Natural killer cell (primary cell): ENCODE measurements at regions of chr2 and their contacts with region 1.

Region 1: GRCh38 chr2:62774555-62775366 is 69.2 kb downstream of the EHBP1 start:
- DNase-seq: peak in 1 of 2 donors; percentile 64
- ATAC-seq: peak; percentile 48 to 66 (median 63)
- H3K4me3 ChIP-seq: no peak overlapping the region
- H3K4me3 Mint-ChIP-seq: no peak overlapping the region
- H3K27ac ChIP-seq: no peak overlapping the region
- H3K27ac Mint-ChIP-seq: no peak overlapping the region
- H3K4me1 ChIP-seq: no peaks in the 10 kb centered on the region
- H3K4me1 Mint-ChIP-seq: peaks cover 0 to 5% of the 10 kb centered on the region in 2 donors
- H3K27me3 ChIP-seq: no peaks in the 10 kb centered on the region
- H3K27me3 Mint-ChIP-seq: no peaks in the 10 kb centered on the region
- CTCF ChIP-seq: peak; percentile 89

Region 2: DNA sequence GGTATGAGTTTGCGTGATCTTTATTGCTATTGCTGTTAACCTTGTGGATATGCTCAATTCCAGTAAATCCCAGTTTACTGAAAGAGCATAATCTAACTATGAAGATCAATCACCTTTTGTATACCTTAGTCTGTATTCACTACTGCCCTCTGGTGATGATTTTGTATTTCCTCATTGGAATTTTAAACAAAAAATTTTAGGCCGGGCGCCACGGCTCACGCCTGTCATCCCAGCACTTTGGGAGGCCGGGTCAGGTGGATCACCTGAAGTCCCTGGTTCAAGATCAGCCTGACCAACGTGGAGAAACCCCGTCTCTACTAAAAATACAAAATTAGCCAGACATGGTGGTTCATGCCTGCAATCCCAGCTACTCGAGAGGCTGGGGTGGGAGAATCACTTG is 864.2 kb before region 1 on chr2:
- intact Hi-C with region 1: loop called (anchors 5 kb)
- DNase-seq: no peak
- ATAC-seq: no peak
- H3K4me3 ChIP-seq: no peak overlapping the region
- H3K4me3 Mint-ChIP-seq: no peak overlapping the region
- H3K27ac ChIP-seq: no peak overlapping the region
- H3K27ac Mint-ChIP-seq: no peak overlapping the region
- H3K4me1 ChIP-seq: peaks cover 6% of the 10 kb centered on the region
- H3K4me1 Mint-ChIP-seq: peaks cover 17 to 24% of the 10 kb centered on the region in 2 donors
- H3K27me3 ChIP-seq: no peaks in the 10 kb centered on the region
- H3K27me3 Mint-ChIP-seq: no peaks in the 10 kb centered on the region
- CTCF ChIP-seq: no peak

Region 3: GRCh38 chr2:61993444-61994024 is 781.2 kb before region 1 on chr2:
- intact Hi-C with region 1: loop called (anchors 2 kb)
- DNase-seq: peak in 1 of 2 donors; percentile 59
- ATAC-seq: peak in 2 of 3 donors; percentile 49 to 56
- H3K4me3 ChIP-seq: no peak overlapping the region
- H3K4me3 Mint-ChIP-seq: no peak overlapping the region
- H3K27ac ChIP-seq: no peak overlapping the region
- H3K27ac Mint-ChIP-seq: no peak overlapping the region
- H3K4me1 ChIP-seq: no peaks in the 10 kb centered on the region
- H3K4me1 Mint-ChIP-seq: peaks cover 0 to 7% of the 10 kb centered on the region in 2 donors
- H3K27me3 ChIP-seq: no peaks in the 10 kb centered on the region
- H3K27me3 Mint-ChIP-seq: no peaks in the 10 kb centered on the region
- CTCF ChIP-seq: peak; percentile 40

Region 4: GRCh38 chr2:62814123-62814522 is 39.4 kb after region 1 on chr2:
- intact Hi-C with region 1: no loop called
- DNase-seq: no peak
- ATAC-seq: no peak
- H3K4me3 ChIP-seq: no peak overlapping the region
- H3K4me3 Mint-ChIP-seq: no peak overlapping the region
- H3K27ac ChIP-seq: no peak overlapping the region
- H3K27ac Mint-ChIP-seq: no peak overlapping the region
- H3K4me1 ChIP-seq: no peaks in the 10 kb centered on the region
- H3K4me1 Mint-ChIP-seq: peaks cover 11 to 12% of the 10 kb centered on the region in 2 donors
- H3K27me3 ChIP-seq: no peaks in the 10 kb centered on the region
- H3K27me3 Mint-ChIP-seq: no peaks in the 10 kb centered on the region
- CTCF ChIP-seq: no peak

Region 5: DNA sequence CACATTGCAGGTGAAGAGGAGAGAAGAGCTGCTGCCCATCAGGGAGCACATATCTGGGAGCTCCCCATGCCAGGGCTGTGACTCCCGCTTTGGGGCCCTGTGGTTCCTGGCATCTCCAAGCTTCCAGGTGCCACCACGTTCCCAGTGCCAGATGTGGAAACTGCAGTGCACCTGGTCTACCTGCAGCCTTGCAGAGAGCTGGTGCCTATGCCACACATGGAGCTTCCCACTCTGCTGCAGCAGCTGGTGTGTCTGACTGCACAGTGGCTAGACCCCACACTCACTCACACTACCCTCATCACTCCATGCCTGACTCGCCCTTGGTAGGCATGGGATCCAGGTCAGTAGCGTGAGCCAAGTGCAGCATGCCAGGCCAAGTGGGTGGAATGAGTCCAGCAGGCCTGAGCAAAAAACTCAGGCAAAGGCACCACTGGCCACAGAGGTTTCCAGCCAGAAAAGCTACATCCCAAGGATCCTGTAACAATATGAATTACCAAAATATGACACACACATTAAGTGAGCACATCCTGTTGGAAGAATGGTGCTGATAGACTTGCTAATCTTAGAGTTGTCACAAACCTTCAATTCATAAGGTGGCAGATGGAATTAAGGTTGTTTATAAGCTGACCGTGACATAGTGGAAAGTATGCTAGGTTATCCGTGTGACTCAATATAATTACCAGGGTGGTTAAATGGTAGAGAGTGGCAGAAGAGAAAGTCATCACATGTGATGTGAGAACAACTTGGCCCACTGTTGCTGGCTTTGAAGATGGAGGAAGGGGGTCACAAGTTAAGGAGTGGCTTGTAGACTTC is 81.7 kb after region 1 on chr2:
- intact Hi-C with region 1: no loop called
- DNase-seq: no peak
- ATAC-seq: no peak
- H3K4me3 ChIP-seq: no peak overlapping the region
- H3K4me3 Mint-ChIP-seq: no peak overlapping the region
- H3K27ac ChIP-seq: no peak overlapping the region
- H3K27ac Mint-ChIP-seq: no peak overlapping the region
- H3K4me1 ChIP-seq: no peaks in the 10 kb centered on the region
- H3K4me1 Mint-ChIP-seq: no peaks in the 10 kb centered on the region
- H3K27me3 ChIP-seq: no peaks in the 10 kb centered on the region
- H3K27me3 Mint-ChIP-seq: no peaks in the 10 kb centered on the region
- CTCF ChIP-seq: no peak